Spleen (tissue), 13 donors: ENCODE measurements at regions of chr18 and their contacts with region 1.

Region 1: DNA sequence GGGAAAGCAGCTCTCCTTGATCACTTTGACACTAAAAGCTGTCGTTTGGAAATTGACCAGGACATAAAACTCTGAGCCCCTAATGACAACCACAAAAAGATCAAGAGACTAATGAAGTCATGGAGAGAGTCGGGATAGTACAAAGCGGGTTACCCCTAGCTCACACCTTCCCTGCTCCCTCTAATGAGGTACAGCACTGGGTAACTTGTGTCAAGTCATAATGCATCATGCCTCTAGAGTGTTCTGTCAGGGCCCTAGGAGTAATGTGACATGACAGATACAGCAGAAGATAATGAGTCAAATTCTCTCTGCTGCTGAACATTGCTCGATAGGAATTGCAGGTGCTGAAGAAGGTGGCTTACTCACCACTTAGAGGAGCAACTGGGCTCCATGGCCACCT is 130.7 kb downstream of the AQP4 start:
- DNase-seq: no peak
- H3K4me3 ChIP-seq: no peak overlapping the region
- H3K27ac ChIP-seq: no peak overlapping the region
- H3K4me1 ChIP-seq: no peaks in the 10 kb centered on the region
- H3K27me3 ChIP-seq: no peaks in the 10 kb centered on the region
- CTCF ChIP-seq: no peak
- POLR2A ChIP-seq: no peak

Region 2: DNA sequence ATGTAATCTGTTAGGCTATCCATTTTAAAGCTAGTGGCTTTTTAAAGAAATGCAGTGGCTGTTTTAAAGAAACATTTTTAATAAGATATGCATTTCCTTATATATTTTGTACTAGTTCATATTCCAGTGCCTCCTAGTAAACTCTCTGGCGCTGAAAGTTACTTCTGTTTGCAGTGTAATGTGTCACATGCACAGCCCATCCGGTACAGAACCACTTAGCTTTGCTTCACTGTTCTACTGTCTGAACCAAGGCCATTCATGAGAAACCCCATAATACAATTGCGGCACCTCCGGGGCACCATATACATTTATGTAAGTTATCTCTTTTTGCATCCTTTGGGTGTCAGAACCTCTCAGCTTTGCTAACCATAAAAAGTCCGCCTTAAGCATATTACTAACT is 71.8 kb before region 1 on chr18:
- intact Hi-C with region 1: loop called (anchors 5 kb)
- DNase-seq: no peak
- H3K4me3 ChIP-seq: no peak overlapping the region
- H3K27ac ChIP-seq: no peak overlapping the region
- H3K4me1 ChIP-seq: peaks cover 0 to 6% (median 2%) of the 10 kb centered on the region in 6 donors
- H3K27me3 ChIP-seq: peaks cover 0 to 39% (median 5%) of the 10 kb centered on the region in 7 donors
- CTCF ChIP-seq: no peak
- POLR2A ChIP-seq: no peak